ENCODE measurements at regions of chr2 and their contacts with region 1.

Region 1: GRCh38 chr2:215460682-215461382 is 25.0 kb upstream of the FN1 start:
- DNase-seq: no peak

Region 2: DNA sequence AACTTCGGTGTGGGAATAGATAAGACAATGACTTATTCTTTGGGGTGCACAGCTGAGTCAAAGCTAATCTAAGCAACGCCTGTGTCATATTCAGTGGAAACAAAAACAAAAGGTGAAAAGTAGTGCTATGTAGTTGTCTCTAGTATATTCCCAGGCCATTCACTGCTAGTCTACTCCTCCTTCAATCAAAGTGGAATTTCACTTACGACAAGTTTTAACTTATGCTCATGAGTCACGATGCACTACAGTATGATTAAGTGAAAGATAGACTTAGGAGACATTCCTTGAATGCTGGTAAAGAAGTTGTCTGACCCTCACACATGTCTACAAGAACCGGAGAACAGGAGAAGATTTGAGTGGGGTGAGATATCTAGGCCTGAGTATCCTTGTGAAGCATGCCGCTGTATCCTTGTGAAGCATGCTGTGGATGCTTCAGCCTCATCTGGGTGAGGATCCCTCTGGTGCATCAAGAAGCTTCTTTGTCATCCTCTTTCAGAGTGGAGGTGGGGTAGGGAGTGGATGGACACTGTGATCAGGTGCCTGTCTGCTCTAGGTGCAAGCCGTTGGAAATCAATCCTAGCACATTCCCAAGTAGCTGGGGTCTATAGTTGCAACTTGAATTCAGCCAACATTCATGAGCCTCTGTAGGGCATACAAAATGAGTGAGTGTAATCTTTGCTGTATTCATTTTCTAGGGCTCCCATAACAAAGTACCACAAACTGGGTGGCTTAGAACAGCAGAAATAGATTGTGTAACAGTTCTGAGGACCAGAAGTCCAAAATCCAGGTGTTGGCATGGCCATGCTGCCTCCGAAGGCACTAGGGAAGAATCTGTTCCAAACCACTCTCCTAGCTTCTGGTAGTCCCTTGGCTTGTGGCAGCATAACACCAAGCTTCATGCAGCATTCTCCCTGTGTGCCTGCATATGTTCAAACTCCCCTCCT is 148.5 kb after region 1 on chr2:
- intact Hi-C with region 1: loop called (anchors 10 kb)
- DNase-seq: no peak

Region 3: GRCh38 chr2:215711471-215712034 is 250.7 kb after region 1 on chr2:
- intact Hi-C with region 1: loop called (anchors 10 kb)
- DNase-seq: no peak

Region 4: DNA sequence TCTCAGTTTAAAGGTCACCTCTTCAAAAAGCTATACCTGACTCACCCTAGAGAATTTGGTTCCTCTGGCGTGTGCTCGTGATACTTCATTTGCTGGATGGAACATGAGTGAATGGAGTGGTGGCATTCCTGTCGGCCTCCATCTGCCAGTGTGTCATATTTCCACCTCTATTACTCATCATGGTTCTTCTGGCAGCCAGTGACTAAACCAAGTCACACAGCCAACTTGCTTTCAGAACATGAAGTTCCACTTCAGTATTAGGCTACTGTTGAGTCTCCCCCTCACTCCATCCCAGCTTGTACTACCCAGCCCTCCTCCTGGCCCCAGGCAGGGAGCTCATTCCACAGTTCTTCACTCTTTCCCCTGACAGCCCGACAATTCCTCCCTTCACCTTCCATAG is 382.7 kb after region 1 on chr2:
- intact Hi-C with region 1: loop called (anchors 5 kb)
- DNase-seq: no peak